Activated naive CD4-positive, alpha-beta T cell treated with anti-CD3 and anti-CD28 coated beads for 36 hours (primary cell): ENCODE measurements at regions of chr12 and their contacts with region 1.

Region 1: GRCh38 chr12:6563448-6564050 is 4.5 kb downstream of the NOP2 start:
- DNase-seq: peak; percentile 79
- H3K4me3 Mint-ChIP-seq: no peak overlapping the region
- H3K27ac Mint-ChIP-seq: peak overlapping the region; percentile 36
- H3K4me1 Mint-ChIP-seq: peaks cover 39% of the 10 kb centered on the region
- H3K27me3 Mint-ChIP-seq: no peaks in the 10 kb centered on the region

Region 2: GRCh38 chr12:6540181-6540877 is 23.2 kb before region 1 on chr12:
- CTCF ChIA-PET with region 1: interaction called, 15 read pairs
- intact Hi-C with region 1: no loop called
- DNase-seq: peak; percentile 75
- H3K4me3 Mint-ChIP-seq: peak overlapping the region; percentile 59
- H3K27ac Mint-ChIP-seq: peak overlapping the region; percentile 63
- H3K4me1 Mint-ChIP-seq: peaks cover 57% of the 10 kb centered on the region
- H3K27me3 Mint-ChIP-seq: no peaks in the 10 kb centered on the region

Region 3: GRCh38 chr12:6574576-6575295 is 11.2 kb after region 1 on chr12:
- CTCF ChIA-PET with region 1: interaction called, 17 read pairs
- intact Hi-C with region 1: no loop called
- DNase-seq: peak; percentile 59
- H3K4me3 Mint-ChIP-seq: no peak overlapping the region
- H3K27ac Mint-ChIP-seq: peak overlapping the region; percentile 87
- H3K4me1 Mint-ChIP-seq: peaks cover 45% of the 10 kb centered on the region
- H3K27me3 Mint-ChIP-seq: no peaks in the 10 kb centered on the region

Region 4: DNA sequence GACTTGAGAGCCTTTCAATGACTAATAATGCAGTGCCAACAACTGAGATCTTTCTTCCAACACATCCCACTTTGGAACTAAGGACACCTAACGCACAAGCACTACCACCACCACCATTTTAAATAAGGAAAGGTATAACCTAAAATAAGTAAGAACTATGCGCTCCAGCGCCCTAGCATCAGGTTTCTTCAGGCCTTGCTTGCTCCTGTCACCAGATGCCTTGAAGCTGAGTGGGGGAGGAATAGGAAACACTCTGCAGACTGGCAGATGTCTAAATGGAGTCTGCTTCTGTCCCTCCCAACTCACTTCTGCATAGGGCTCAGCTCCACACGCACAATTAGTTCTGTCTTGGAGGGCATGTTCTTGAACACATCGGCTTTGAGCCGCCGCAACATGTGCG is 28.5 kb after region 1 on chr12:
- CTCF ChIA-PET with region 1: interaction called, 12 read pairs
- intact Hi-C with region 1: no loop called
- DNase-seq: no peak
- H3K4me3 Mint-ChIP-seq: no peak overlapping the region
- H3K27ac Mint-ChIP-seq: peak overlapping the region; percentile 76
- H3K4me1 Mint-ChIP-seq: peaks cover 12% of the 10 kb centered on the region
- H3K27me3 Mint-ChIP-seq: no peaks in the 10 kb centered on the region